ENCODE measurements at regions of chr18 and their contacts with region 1.

Region 1: DNA sequence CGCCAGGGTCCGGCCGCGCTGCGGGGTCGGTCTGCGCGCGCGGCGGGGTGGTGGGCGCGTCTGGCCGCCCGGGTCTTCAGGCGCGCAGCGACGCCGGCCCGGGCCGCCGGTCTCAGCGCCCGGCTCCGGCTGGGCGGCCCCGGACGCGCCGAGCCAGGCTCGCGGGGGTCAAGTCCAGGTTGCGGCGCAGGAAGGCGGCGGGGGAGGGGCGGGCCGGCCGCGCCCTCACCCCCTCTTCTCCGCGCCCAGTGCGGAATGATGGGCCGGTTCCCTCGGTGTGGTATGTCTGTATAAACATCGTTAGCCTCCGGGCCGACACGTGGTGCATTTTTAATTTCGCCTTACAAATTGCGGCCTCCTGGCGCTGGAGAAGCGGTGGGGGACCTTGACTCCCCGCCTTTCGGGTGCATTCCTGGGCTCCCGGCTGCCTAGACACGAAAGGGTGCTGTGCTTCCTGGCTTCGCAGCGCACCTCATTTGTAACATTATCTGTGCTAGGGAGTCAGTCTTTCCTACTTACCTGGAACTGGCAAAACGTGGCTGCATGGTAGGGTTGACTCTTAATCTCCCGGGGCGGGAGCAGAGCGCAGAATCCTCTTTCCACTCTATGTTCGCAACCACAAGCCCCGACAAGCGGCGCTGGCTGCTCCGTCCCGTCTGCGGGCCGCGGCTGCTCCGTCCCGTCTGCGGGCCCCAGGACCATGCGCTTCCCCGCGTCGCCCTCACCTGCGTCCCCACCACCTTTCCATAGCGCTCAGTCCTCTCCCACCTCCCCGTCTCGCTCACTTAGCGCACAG is 69.0 kb downstream of the CTAGE1 start:
- DNase-seq: peak; percentile 80 to 92 (median 85)
- H3K4me3 ChIP-seq: peak overlapping the region; percentile 66
- H3K27ac ChIP-seq: peak overlapping the region; percentile 75 to 89
- H3K4me1 ChIP-seq: peaks cover 12% of the 10 kb centered on the region
- H3K27me3 ChIP-seq: no peaks in the 10 kb centered on the region
- CTCF ChIP-seq: peak in 1 of 3 donors; percentile 1
- EP300 ChIP-seq: no peak
- POLR2A ChIP-seq: peak; percentile 4

Region 2: GRCh38 chr18:22169007-22169864 is 179.5 kb before region 1 on chr18 and contains the start of gene GATA6:
- intact Hi-C with region 1: loop called (anchors 2 to 5 kb)
- DNase-seq: peak; percentile 94 to 96 (median 95)
- H3K4me3 ChIP-seq: peak within 1 kb of the TSS; percentile 98
- H3K27ac ChIP-seq: peak within 1 kb of the TSS; percentile 96 to 97
- H3K4me1 ChIP-seq: peaks cover 4% of the 10 kb centered on the region
- H3K27me3 ChIP-seq: no peaks in the 10 kb centered on the region
- CTCF ChIP-seq: peak in 2 of 3 donors; percentile 50 to 64
- EP300 ChIP-seq: no peak
- POLR2A ChIP-seq: peak; percentile 83
- total RNA-seq, gene GATA6: 82.4 to 221 (median 140) TPM

Region 3: GRCh38 chr18:22207021-22207758 is 141.5 kb before region 1 on chr18:
- intact Hi-C with region 1: loop called in 2 of 4 experiments (anchors 5 to 10 kb)
- DNase-seq: peak; percentile 57 to 77 (median 69)
- H3K4me3 ChIP-seq: no peak overlapping the region
- H3K27ac ChIP-seq: peak overlapping the region in 1 of 2 donors; percentile 70
- H3K4me1 ChIP-seq: peaks cover 18% of the 10 kb centered on the region
- H3K27me3 ChIP-seq: no peaks in the 10 kb centered on the region
- CTCF ChIP-seq: no peak
- EP300 ChIP-seq: no peak
- POLR2A ChIP-seq: no peak

Region 4: DNA sequence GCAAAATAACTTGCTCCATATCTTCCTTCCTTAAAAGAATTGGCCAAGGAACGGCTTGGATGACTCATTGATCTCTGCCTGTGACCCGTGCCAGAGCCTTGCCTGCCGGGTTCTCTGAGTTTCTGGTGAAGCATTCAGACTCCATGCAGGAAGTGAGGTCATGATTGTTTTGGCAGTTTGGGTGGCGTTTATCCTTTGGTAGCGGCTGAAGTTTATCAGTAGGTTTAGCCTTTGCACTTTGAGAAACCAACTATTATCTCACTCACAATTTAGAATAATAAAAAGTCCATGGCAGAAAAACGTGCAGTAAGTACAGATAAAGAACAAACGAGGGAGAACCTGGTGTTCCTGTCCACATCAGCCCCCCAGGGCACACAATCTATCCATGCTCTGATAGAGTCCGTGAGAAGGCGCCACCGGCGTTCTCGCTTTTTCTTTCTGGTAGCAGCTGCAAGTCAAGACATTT is 84.0 kb after region 1 on chr18:
- intact Hi-C with region 1: loop called in 1 of 4 experiments (anchors 10 kb)
- DNase-seq: peak; percentile 67 to 84 (median 80)
- H3K4me3 ChIP-seq: no peak overlapping the region
- H3K27ac ChIP-seq: no peak overlapping the region
- H3K4me1 ChIP-seq: peaks cover 1% of the 10 kb centered on the region
- H3K27me3 ChIP-seq: no peaks in the 10 kb centered on the region
- CTCF ChIP-seq: no peak
- EP300 ChIP-seq: no peak
- POLR2A ChIP-seq: no peak

Region 5: GRCh38 chr18:22563098-22563707 is 214.5 kb after region 1 on chr18:
- intact Hi-C with region 1: loop called in 3 of 4 experiments (anchors 5 to 10 kb)
- DNase-seq: peak in 2 of 5 donors; percentile 35 to 59
- H3K4me3 ChIP-seq: no peak overlapping the region
- H3K27ac ChIP-seq: no peak overlapping the region
- H3K4me1 ChIP-seq: no peaks in the 10 kb centered on the region
- H3K27me3 ChIP-seq: no peaks in the 10 kb centered on the region
- CTCF ChIP-seq: peak; percentile 80 to 90 (median 88)
- EP300 ChIP-seq: peak; percentile 11
- POLR2A ChIP-seq: no peak